Left cardiac atrium (tissue), 4 donors: ENCODE measurements at regions of chr2 and their contacts with region 1.

Region 1: GRCh38 chr2:144041612-144042011 is 478.3 kb downstream of the ZEB2 start:
- DNase-seq: no peak
- ATAC-seq: no peak

Region 2: GRCh38 chr2:143742581-143742980 is 299.0 kb before region 1 on chr2:
- intact Hi-C with region 1: no loop called
- DNase-seq: no peak
- ATAC-seq: no peak

Region 3: DNA sequence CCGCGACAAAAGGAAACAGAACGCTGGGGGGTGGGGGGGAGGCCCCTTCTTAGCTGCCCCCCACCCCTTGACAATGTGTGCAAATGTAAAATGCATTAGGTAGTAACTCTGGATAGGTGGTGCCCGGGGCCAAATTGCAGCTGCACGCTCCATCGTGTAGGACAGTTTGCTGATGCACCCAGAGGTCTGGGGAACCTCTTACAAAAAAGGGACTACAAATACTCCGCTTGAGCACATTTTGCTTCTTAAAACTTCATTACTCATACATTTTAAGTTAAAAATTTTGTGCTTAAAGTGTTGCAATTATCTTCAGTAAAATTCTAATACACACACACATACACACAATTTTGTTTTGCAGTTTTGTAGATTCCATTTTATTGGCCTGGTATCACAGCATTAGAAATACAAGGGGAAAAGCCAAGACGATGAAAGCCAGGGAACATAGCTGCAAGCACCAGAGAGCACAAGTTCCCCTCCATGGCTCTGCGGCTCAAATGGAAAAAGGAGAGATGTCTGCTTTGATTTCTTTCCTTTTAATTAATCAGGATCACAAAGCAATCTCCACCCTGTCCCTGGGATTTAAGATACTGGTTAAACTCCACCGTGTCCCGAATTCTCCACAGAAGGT is 103.8 kb before region 1 on chr2:
- intact Hi-C with region 1: no loop called
- DNase-seq: no peak
- ATAC-seq: peak; percentile 19 to 43

Region 4: DNA sequence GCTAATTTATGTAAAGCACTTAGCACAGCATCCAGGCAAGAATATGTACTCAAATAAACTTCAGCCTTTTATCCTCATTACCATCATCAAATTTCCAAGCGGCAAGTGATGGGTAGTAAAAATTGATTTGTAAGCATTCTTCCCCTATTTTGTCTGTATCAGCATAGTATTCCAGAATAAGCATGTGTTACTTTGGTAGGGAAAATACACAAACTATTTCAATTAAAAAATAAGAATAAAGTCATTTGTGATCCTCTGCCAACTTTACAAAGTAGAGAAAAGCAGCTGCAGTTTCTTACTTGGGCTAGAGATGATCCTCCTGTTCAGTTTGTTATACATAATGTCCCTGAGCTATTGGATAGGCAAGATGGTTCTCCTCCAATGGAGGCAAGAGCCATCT is 14.9 kb before region 1 on chr2:
- intact Hi-C with region 1: loop called in 1 of 2 experiments (anchors 1 kb)
- DNase-seq: no peak
- ATAC-seq: no peak

Region 5: GRCh38 chr2:144217853-144218633 is 176.4 kb after region 1 on chr2:
- intact Hi-C with region 1: no loop called
- DNase-seq: no peak
- ATAC-seq: no peak